ENCODE measurements at regions of chr1 and their contacts with region 1.

Region 1: GRCh38 chr1:45769261-45769932 is 18.9 kb upstream of the IPP start:
- DNase-seq: no peak
- ATAC-seq: no peak
- H3K4me3 Mint-ChIP-seq: no peak overlapping the region
- H3K27ac Mint-ChIP-seq: no peak overlapping the region
- H3K4me1 Mint-ChIP-seq: no peaks in the 10 kb centered on the region
- H3K27me3 Mint-ChIP-seq: no peaks in the 10 kb centered on the region
- CTCF ChIP-seq: no peak

Region 2: GRCh38 chr1:45679123-45679522 is 90.3 kb before region 1 on chr1:
- CTCF ChIA-PET with region 1: no interaction called
- POLR2A ChIA-PET with region 1: no interaction called
- intact Hi-C with region 1: no loop called
- DNase-seq: no peak
- ATAC-seq: no peak
- H3K4me3 Mint-ChIP-seq: no peak overlapping the region
- H3K27ac Mint-ChIP-seq: no peak overlapping the region
- H3K4me1 Mint-ChIP-seq: peaks cover 77% of the 10 kb centered on the region
- H3K27me3 Mint-ChIP-seq: no peaks in the 10 kb centered on the region
- CTCF ChIP-seq: no peak

Region 3: DNA sequence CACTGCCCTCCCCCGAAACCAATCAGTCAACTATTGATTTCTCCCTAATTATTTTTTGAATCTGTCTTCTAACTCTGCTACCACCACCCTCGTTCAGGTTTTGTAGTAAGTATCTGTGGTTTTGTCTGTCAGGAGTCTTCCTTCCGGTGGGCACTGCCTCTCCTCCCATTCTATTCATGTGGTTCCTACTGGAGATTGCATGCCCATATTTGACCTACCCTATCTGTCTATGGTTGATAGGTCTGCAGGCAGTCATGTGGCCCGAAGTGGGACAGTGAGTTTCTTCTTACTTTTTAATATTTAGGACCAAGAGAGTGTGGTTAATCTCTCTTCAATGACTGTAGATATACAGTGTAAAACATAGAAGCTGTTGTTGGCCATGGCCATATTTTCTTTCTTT is 16.2 kb after region 1 on chr1:
- CTCF ChIA-PET with region 1: no interaction called
- POLR2A ChIA-PET with region 1: interaction called, 10 read pairs
- intact Hi-C with region 1: no loop called
- DNase-seq: no peak
- ATAC-seq: no peak
- H3K4me3 Mint-ChIP-seq: no peak overlapping the region
- H3K27ac Mint-ChIP-seq: no peak overlapping the region
- H3K4me1 Mint-ChIP-seq: peaks cover 13% of the 10 kb centered on the region
- H3K27me3 Mint-ChIP-seq: no peaks in the 10 kb centered on the region
- CTCF ChIP-seq: no peak